GM12878 (cell line): ENCODE measurements at regions of chr17 and their contacts with region 1.

Region 1: DNA sequence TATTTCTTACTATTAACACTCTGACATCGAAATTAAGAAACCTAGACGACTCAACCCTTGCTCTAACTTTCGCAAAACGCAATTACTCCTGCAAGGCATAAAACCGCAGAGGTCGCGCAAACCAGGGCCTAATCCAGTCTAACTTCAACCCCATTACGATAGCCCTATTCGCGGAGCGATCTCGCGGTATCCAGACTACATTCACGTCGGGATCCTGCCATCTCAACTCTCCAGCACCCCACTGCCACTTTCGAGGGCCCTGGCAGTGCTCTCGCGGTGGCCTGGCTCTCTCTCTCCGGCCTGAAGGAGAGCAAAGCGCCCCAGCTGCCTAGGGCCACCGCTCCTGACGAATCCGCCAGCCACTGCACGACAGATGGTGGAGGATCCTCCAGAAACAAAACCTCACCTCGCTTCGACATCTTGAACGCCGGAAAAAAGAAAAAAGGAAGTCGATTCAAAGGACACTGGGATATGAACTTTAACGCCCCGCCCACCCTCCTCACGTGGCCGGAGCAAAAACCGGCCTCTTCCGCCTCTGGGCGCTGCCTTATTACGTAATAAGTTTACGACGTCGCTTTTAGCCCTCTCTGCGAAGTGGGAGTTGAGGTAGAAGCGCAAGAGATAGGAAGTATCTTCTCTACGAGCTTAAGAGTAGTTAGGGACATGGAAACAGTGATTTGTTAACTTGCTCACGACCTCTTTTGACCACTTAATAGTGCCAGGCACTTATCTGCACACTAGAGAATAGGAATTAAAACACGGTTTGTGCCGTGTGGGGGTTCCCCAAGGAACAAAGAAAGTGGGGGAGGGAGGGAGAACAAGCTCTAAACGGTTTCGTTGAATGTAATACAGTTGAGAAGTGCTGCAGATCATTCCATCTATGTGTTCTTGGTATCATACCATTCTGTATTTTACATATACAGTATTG is at the start of gene RPL23:
- DNase-seq: peak; percentile 87
- ATAC-seq: peak; percentile 85
- H3K4me3 ChIP-seq: peak within 1 kb of the TSS; percentile 88
- H3K27ac ChIP-seq: peak within 1 kb of the TSS; percentile 95
- H3K4me1 ChIP-seq: peaks cover 18% of the 10 kb centered on the region
- H3K27me3 ChIP-seq: no peaks in the 10 kb centered on the region
- CTCF ChIP-seq: no peak
- EP300 ChIP-seq: peak in 1 of 2 experiments; percentile 51; a peak in 1 of 4 replicates
- POLR2A ChIP-seq: peak; percentile 99
- RAD21 ChIP-seq: no peak
- polyA plus RNA-seq, gene RPL23: 3,319 to 3,754 TPM

Region 2: GRCh38 chr17:38824899-38825761 is 28.4 kb before region 1 on chr17 and contains the start of gene CWC25:
- CTCF ChIA-PET with region 1: interaction called, 4 read pairs
- POLR2A ChIA-PET with region 1: interaction called, 37 read pairs
- RAD21 ChIA-PET with region 1: interaction called, 8 read pairs
- SMC1A ChIA-PET with region 1: interaction called, 13 read pairs
- in situ Hi-C with region 1: no loop called
- intact Hi-C with region 1: no loop called
- DNase-seq: peak; percentile 97
- ATAC-seq: peak; percentile 92
- H3K4me3 ChIP-seq: peak within 1 kb of the TSS; percentile 87
- H3K27ac ChIP-seq: peak within 1 kb of the TSS; percentile 90
- H3K4me1 ChIP-seq: peaks cover 6% of the 10 kb centered on the region
- H3K27me3 ChIP-seq: no peaks in the 10 kb centered on the region
- CTCF ChIP-seq: no peak
- EP300 ChIP-seq: peak; percentile 43 to 80; a peak in 3 of 4 replicates
- POLR2A ChIP-seq: peak; percentile 97
- RAD21 ChIP-seq: 0 out of 2 replicates have a peak, but pooled peaks have one; percentile 2
- polyA plus RNA-seq, gene CWC25: 25.0 to 29.7 TPM

Region 3: GRCh38 chr17:38898812-38899348 is 45.3 kb after region 1 on chr17:
- CTCF ChIA-PET with region 1: interaction called, 3 read pairs
- POLR2A ChIA-PET with region 1: interaction called, 10 read pairs
- RAD21 ChIA-PET with region 1: no interaction called
- SMC1A ChIA-PET with region 1: interaction called, 6 read pairs
- in situ Hi-C with region 1: no loop called
- intact Hi-C with region 1: no loop called
- DNase-seq: peak; percentile 64
- ATAC-seq: peak; percentile 97
- H3K4me3 ChIP-seq: peak overlapping the region; percentile 15; the same call in 1 of the 2 replicates
- H3K27ac ChIP-seq: peak overlapping the region; percentile 96
- H3K4me1 ChIP-seq: peaks cover 28% of the 10 kb centered on the region
- H3K27me3 ChIP-seq: no peaks in the 10 kb centered on the region
- CTCF ChIP-seq: no peak
- EP300 ChIP-seq: peak in 1 of 2 experiments; percentile 50; a peak in 1 of 4 replicates
- POLR2A ChIP-seq: peak; percentile 71
- RAD21 ChIP-seq: no peak